Activated CD4-positive, alpha-beta memory T cell treated with anti-CD3 and anti-CD28 coated beads for 36 hours (primary cell): ENCODE measurements at regions of chr10 and their contacts with region 1.

Region 1: GRCh38 chr10:124741281-124741921 is 2.8 kb downstream of the FAM53B start:
- DNase-seq: peak; percentile 86
- H3K4me3 Mint-ChIP-seq: peak overlapping the region; percentile 91
- H3K27ac Mint-ChIP-seq: peak overlapping the region; percentile 88
- H3K4me1 Mint-ChIP-seq: peaks cover 72% of the 10 kb centered on the region
- H3K27me3 Mint-ChIP-seq: no peaks in the 10 kb centered on the region

Region 2: GRCh38 chr10:124461438-124462347 is 279.7 kb before region 1 on chr10 and contains the start of gene LHPP:
- CTCF ChIA-PET with region 1: interaction called, 5 read pairs
- POLR2A ChIA-PET with region 1: no interaction called
- intact Hi-C with region 1: loop called (anchors 5 kb)
- DNase-seq: peak; percentile 91
- H3K4me3 Mint-ChIP-seq: peak within 1 kb of the TSS; percentile 80
- H3K27ac Mint-ChIP-seq: peak within 1 kb of the TSS; percentile 66
- H3K4me1 Mint-ChIP-seq: peaks cover 23% of the 10 kb centered on the region
- H3K27me3 Mint-ChIP-seq: peaks cover 3% of the 10 kb centered on the region
- total RNA-seq, gene LHPP: 10.1 to 12.3 TPM

Region 3: DNA sequence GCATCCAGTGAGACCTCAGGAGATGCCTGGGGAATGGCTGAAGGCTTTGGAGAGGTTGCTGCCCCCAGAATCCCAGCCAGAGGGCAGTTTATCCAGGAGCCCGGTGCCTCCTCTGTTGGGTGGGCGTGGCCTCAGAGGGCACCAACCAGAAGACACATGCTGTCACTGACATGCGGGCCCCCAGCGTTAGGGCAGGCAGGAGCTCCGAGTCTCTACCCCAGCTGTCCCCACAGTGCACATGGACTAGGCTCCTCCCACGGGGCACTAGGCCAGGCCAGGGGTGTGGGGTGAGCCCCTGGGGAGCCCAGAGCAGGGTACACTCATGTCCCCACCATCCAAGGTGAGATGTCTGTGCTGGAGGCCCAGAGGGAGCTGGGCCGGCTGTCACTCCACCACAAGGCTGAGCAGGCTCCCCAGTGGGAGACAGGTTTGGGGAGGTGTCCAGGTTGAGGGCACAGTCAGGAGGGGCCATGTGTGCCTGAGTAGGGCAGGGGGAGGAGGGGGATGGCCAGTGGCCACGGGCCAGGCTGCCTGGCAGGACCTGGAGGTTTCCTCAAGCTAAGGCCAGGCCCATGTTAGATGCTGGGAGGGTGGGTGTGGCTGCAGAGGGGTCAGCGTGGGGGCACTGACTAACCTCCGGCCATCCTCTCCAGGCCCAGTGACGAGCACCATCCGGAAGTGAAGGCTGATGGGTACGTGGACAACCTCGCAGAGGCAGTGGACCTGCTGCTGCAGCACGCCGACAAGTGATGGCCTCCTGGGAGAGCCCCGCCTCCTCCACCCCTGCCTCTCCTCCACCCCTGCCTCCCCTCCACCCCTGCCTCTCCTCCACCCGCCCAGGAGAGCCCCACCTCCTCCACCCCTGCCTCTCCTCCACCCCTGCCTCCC is 128.5 kb before region 1 on chr10:
- CTCF ChIA-PET with region 1: interaction called, 13 read pairs
- POLR2A ChIA-PET with region 1: no interaction called
- intact Hi-C with region 1: no loop called
- DNase-seq: peak; percentile 39
- H3K4me3 Mint-ChIP-seq: no peak overlapping the region
- H3K27ac Mint-ChIP-seq: no peak overlapping the region
- H3K4me1 Mint-ChIP-seq: peaks cover 34% of the 10 kb centered on the region
- H3K27me3 Mint-ChIP-seq: no peaks in the 10 kb centered on the region

Region 4: GRCh38 chr10:124641282-124642087 is 99.9 kb before region 1 on chr10:
- CTCF ChIA-PET with region 1: interaction called, 30 read pairs
- POLR2A ChIA-PET with region 1: no interaction called
- intact Hi-C with region 1: loop called (anchors 2 kb)
- DNase-seq: peak; percentile 76
- H3K4me3 Mint-ChIP-seq: peak overlapping the region; percentile 54
- H3K27ac Mint-ChIP-seq: peak overlapping the region; percentile 94
- H3K4me1 Mint-ChIP-seq: peaks cover 78% of the 10 kb centered on the region
- H3K27me3 Mint-ChIP-seq: no peaks in the 10 kb centered on the region

Region 5: DNA sequence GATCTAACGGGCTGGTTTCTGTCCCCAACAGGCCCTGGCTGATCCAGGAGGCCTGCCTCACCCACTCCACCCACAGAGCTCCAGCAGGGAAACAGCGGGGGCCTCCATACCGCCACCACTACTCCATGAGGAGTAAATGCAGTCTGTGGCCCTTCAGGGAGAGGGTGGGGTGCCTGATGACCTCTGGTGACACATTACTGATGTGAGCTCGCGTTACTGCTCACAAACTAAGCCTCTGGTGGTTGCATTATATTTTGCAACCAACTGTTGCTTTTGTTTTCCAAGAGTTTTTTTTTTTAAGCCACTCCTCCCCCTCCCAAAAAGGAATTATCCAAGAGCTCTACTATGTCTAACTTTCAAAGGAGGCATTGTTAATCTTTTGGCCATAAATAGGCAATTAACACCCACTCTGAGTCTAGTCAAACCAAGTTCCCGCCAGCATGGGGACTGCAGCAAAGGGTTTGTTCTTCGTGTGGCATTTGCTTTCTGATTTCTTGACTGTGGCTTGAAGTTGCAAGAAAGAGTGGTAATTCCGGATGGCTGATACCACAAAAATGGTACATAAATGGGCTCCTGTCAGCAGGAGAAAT is 69.8 kb before region 1 on chr10:
- CTCF ChIA-PET with region 1: interaction called, 14 read pairs
- POLR2A ChIA-PET with region 1: interaction called, 10 read pairs
- intact Hi-C with region 1: no loop called
- DNase-seq: peak; percentile 48
- H3K4me3 Mint-ChIP-seq: no peak overlapping the region
- H3K27ac Mint-ChIP-seq: peak overlapping the region; percentile 83
- H3K4me1 Mint-ChIP-seq: peaks cover 89% of the 10 kb centered on the region
- H3K27me3 Mint-ChIP-seq: no peaks in the 10 kb centered on the region

Region 6: GRCh38 chr10:124697830-124698544 is 43.4 kb before region 1 on chr10:
- CTCF ChIA-PET with region 1: interaction called, 37 read pairs
- POLR2A ChIA-PET with region 1: interaction called, 21 read pairs
- intact Hi-C with region 1: loop called (anchors 2 kb)
- DNase-seq: peak; percentile 75
- H3K4me3 Mint-ChIP-seq: peak overlapping the region; percentile 26
- H3K27ac Mint-ChIP-seq: peak overlapping the region; percentile 97
- H3K4me1 Mint-ChIP-seq: peaks cover 100% of the 10 kb centered on the region
- H3K27me3 Mint-ChIP-seq: no peaks in the 10 kb centered on the region

Region 7: GRCh38 chr10:124719213-124719851 is 22.1 kb before region 1 on chr10:
- CTCF ChIA-PET with region 1: interaction called, 127 read pairs
- POLR2A ChIA-PET with region 1: interaction called, 44 read pairs
- intact Hi-C with region 1: loop called (anchors 1 kb)
- DNase-seq: peak; percentile 85
- H3K4me3 Mint-ChIP-seq: peak overlapping the region; percentile 74
- H3K27ac Mint-ChIP-seq: peak overlapping the region; percentile 96
- H3K4me1 Mint-ChIP-seq: peaks cover 92% of the 10 kb centered on the region
- H3K27me3 Mint-ChIP-seq: no peaks in the 10 kb centered on the region